ENCODE measurements at regions of chr1 and their contacts with region 1.

Region 1: GRCh38 chr1:171984850-171985485 is 143.7 kb downstream of the DNM3 start:
- DNase-seq: no peak
- H3K4me3 ChIP-seq: no peak overlapping the region
- H3K27ac ChIP-seq: no peak overlapping the region
- H3K4me1 ChIP-seq: no peaks in the 10 kb centered on the region
- H3K27me3 ChIP-seq: no peaks in the 10 kb centered on the region
- CTCF ChIP-seq: peak in 2 of 3 experiments; percentile 74 to 78; a peak in 3 of 4 replicates
- EP300 ChIP-seq: no peak
- POLR2A ChIP-seq: no peak
- RAD21 ChIP-seq: peak; percentile 88 to 91

Region 2: GRCh38 chr1:171644805-171645483 is 340.0 kb before region 1 on chr1:
- CTCF ChIA-PET with region 1: interaction called, 14 read pairs
- POLR2A ChIA-PET with region 1: no interaction called
- DNase-seq: peak; percentile 82 to 89
- H3K4me3 ChIP-seq: peak overlapping the region in 1 of 4 experiments; percentile 14; a peak in 1 of 8 replicates
- H3K27ac ChIP-seq: no peak overlapping the region
- H3K4me1 ChIP-seq: peaks cover 2 to 15% (median 7%) of the 10 kb centered on the region in 4 experiments
- H3K27me3 ChIP-seq: no peaks in the 10 kb centered on the region
- CTCF ChIP-seq: peak; percentile 69 to 99 (median 89)
- EP300 ChIP-seq: no peak
- POLR2A ChIP-seq: no peak
- RAD21 ChIP-seq: peak; percentile 89 to 91

Region 3: DNA sequence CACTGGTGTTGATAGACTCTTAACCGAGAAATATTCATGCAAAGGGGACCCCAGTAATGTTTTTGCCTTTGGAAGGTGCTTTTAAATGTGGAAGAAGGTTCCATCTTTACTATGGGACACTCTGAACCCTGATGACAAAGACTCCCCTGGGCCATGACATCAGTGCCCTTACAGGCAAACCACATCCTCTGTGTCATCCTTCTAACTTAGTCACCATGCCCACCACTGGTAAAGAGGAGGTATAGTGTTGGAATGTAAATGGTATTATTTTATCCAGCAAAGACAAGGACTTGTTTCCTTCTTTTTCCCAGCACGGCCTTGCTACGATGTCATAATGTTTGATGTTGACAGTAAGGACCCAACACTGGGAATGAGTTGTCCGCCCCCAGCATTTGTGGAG is 190.9 kb before region 1 on chr1:
- CTCF ChIA-PET with region 1: interaction called, 694 read pairs
- POLR2A ChIA-PET with region 1: no interaction called
- DNase-seq: no peak
- H3K4me3 ChIP-seq: no peak overlapping the region
- H3K27ac ChIP-seq: no peak overlapping the region
- H3K4me1 ChIP-seq: no peaks in the 10 kb centered on the region
- H3K27me3 ChIP-seq: no peaks in the 10 kb centered on the region
- CTCF ChIP-seq: no peak
- EP300 ChIP-seq: no peak
- POLR2A ChIP-seq: no peak
- RAD21 ChIP-seq: no peak

Region 4: GRCh38 chr1:171841050-171841940 is 143.7 kb before region 1 on chr1 and contains the start of gene DNM3:
- CTCF ChIA-PET with region 1: interaction called, 16 read pairs
- POLR2A ChIA-PET with region 1: no interaction called
- DNase-seq: peak; percentile 57 to 93
- H3K4me3 ChIP-seq: peak within 1 kb of the TSS; percentile 74 to 93 (median 88)
- H3K27ac ChIP-seq: no peak within 1 kb of the TSS
- H3K4me1 ChIP-seq: peaks cover 0 to 6% (median 2%) of the 10 kb centered on the region in 4 experiments; a peak in 1 of 7 replicates
- H3K27me3 ChIP-seq: peaks cover 0 to 4% (median 1%) of the 10 kb centered on the region in 4 experiments; a peak in 3 of 7 replicates
- CTCF ChIP-seq: no peak
- EP300 ChIP-seq: no peak
- POLR2A ChIP-seq: peak; percentile 42 to 72
- RAD21 ChIP-seq: no peak; a peak in 1 of 4 replicates
- total RNA-seq, gene DNM3: 7.4 and 8.5 TPM in 2 replicates

Region 5: GRCh38 chr1:171929121-171929520 is 55.8 kb before region 1 on chr1:
- CTCF ChIA-PET with region 1: interaction called, 16 read pairs
- POLR2A ChIA-PET with region 1: no interaction called
- DNase-seq: no peak
- H3K4me3 ChIP-seq: no peak overlapping the region
- H3K27ac ChIP-seq: no peak overlapping the region
- H3K4me1 ChIP-seq: peaks cover 0 to 6% (median 1%) of the 10 kb centered on the region in 4 experiments; a peak in 1 of 7 replicates
- H3K27me3 ChIP-seq: no peaks in the 10 kb centered on the region
- CTCF ChIP-seq: peak; percentile 2 to 39 (median 10); a peak in 3 of 4 replicates
- EP300 ChIP-seq: no peak
- POLR2A ChIP-seq: no peak
- RAD21 ChIP-seq: no peak

Region 6: GRCh38 chr1:172002725-172003345 is 17.9 kb after region 1 on chr1:
- CTCF ChIA-PET with region 1: interaction called, 87 read pairs
- POLR2A ChIA-PET with region 1: no interaction called
- DNase-seq: no peak
- H3K4me3 ChIP-seq: no peak overlapping the region
- H3K27ac ChIP-seq: no peak overlapping the region
- H3K4me1 ChIP-seq: no peaks in the 10 kb centered on the region
- H3K27me3 ChIP-seq: no peaks in the 10 kb centered on the region
- CTCF ChIP-seq: peak in 2 of 3 experiments; percentile 52 to 57; a peak in 3 of 4 replicates
- EP300 ChIP-seq: no peak
- POLR2A ChIP-seq: no peak
- RAD21 ChIP-seq: peak; percentile 71 to 77